Ovary (tissue), 10 donors: ENCODE measurements at regions of chr1 and their contacts with region 1.

Region 1: GRCh38 chr1:27603681-27604578 is at the start of gene AHDC1:
- DNase-seq: peak; percentile 91 to 94 (median 93)
- H3K4me3 ChIP-seq: peak within 1 kb of the TSS; percentile 75
- H3K27ac ChIP-seq: peak within 1 kb of the TSS; percentile 86 to 92
- H3K4me1 ChIP-seq: peaks cover 12% of the 10 kb centered on the region
- H3K27me3 ChIP-seq: no peaks in the 10 kb centered on the region
- CTCF ChIP-seq: peak in 2 of 3 donors; percentile 46 to 60
- EP300 ChIP-seq: no peak
- POLR2A ChIP-seq: peak; percentile 94
- total RNA-seq, gene AHDC1: 11.3 to 159 (median 91.2) TPM

Region 2: DNA sequence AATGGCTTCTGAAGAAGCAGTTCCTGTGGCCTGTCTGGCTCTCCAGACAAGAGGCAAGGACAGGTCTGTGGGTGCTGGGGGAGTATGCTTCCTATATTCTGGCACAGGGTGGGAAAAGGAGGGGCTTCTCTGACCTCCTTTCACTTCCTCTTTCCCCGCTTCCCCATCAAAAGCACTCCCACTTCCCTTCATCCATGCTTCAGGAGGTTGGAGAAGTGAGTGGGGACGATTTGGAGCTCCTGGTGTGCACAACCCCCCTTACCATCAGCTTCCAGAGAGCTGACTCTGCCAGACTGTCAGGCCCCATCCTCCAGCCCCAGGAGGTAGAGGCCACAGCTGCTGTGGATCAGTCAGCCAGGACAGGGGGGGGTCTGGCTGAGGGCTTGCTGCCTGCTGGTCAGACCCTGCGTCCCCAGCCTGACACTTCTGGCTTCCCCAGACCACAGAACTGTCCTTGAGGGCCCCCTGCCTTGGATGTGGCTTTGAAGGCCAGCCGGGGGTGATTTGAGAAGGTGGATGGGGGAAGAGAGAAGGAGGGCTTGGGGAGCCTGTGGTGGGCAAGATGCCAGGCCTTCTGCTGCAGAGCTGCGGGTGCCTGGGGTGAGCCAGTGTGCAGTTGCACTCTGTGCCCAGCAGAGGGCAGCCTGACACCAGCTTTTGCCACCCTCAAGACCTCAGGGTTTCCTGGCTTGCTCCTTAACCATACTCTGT is 303.4 kb before region 1 on chr1:
- intact Hi-C with region 1: loop called in 3 of 4 experiments (anchors 2 to 5 kb)
- DNase-seq: peak; percentile 88 to 93 (median 89)
- H3K4me3 ChIP-seq: no peak overlapping the region
- H3K27ac ChIP-seq: peak overlapping the region; percentile 13 to 41
- H3K4me1 ChIP-seq: no peaks in the 10 kb centered on the region
- H3K27me3 ChIP-seq: no peaks in the 10 kb centered on the region
- CTCF ChIP-seq: peak; percentile 97 to 99 (median 98)
- EP300 ChIP-seq: no peak
- POLR2A ChIP-seq: peak; percentile 23

Region 3: DNA sequence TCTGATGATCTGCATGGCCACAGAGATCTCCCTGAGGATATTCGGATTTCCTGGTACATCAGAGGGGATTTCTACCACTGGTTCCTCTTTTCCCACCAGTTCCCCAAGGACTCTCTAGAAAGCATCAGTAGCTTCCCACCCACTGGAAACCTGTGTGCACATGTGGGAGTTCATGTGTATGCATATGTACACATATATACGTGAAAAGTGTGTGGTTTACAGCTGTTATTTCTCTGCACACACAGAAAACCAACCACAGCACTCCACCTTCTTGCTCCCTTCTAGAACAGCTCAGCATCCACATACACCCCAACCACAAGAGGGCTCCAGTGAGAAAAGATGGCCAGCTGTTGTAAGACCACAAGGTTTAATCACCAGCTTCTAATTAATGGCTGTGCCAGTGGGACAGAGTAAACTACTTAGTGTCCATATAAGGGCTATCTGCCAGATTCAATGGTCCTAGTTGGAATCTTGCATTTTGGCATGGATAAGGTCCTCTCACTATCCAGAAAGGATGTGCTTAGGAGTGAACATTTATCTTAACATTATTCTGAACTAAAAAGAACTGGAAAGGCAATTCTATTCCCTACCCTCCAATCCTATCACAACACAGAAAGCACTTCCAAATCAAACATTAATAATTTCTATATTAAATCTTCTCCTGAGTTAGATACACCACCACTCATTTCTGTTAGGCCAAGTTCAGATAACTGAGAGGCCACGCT is 187.4 kb before region 1 on chr1:
- intact Hi-C with region 1: loop called in 1 of 4 experiments (anchors 5 kb)
- DNase-seq: no peak
- H3K4me3 ChIP-seq: no peak overlapping the region
- H3K27ac ChIP-seq: no peak overlapping the region
- H3K4me1 ChIP-seq: peaks cover 1% of the 10 kb centered on the region
- H3K27me3 ChIP-seq: no peaks in the 10 kb centered on the region
- CTCF ChIP-seq: no peak
- EP300 ChIP-seq: no peak
- POLR2A ChIP-seq: no peak

Region 4: DNA sequence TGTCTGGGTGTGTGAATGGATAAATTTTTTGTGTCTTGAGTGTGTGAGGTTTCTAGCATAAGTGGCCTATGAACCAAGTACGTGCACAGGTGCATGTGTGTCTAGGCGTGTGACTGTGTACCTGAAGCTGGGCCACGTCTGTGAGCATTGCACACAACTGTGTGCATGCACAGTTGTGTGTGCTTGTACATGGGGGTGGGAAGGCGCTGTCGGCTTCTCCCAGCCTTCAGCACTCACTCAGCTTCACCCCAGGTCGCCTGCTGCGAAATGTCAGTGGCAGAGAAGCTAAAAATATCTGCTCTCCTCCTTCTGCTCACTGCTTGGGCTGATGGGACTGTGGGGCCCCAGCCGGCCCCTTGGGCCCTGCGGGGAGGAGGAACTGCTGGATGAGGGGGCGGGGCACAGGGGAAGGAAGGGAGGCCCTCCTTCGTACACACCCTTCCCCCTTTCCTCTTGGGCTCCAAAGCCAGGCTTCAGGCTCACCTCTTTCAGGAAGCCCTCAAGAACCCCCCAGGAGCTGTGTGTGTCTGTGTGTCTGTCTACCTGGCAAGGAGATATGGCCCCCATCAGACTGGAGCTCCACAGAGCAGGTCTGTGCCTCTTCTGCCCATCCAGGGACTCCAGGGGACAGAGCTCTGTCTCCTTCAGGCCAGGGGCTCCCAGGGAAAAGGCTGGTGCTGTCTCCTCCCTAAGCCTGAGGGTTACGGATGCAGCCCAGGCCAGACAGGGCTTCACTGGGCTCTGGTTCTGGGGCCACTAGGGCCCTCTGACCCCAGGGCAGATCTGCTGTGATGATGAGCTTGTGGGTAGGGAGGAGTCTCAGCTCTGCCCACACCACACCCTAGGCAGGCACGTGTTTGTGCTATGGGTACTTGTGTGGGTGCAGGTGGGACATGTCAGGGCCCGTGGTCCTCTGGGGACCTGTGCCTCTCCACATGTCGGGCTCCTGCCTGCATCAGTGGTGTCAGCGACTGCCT is 78.3 kb before region 1 on chr1:
- intact Hi-C with region 1: loop called in 2 of 4 experiments (anchors 10 kb)
- DNase-seq: peak; percentile 75 to 83 (median 82)
- H3K4me3 ChIP-seq: peak overlapping the region; percentile 16
- H3K27ac ChIP-seq: peak overlapping the region; percentile 46 to 98
- H3K4me1 ChIP-seq: peaks cover 53% of the 10 kb centered on the region
- H3K27me3 ChIP-seq: no peaks in the 10 kb centered on the region
- CTCF ChIP-seq: no peak
- EP300 ChIP-seq: no peak
- POLR2A ChIP-seq: no peak

Region 5: DNA sequence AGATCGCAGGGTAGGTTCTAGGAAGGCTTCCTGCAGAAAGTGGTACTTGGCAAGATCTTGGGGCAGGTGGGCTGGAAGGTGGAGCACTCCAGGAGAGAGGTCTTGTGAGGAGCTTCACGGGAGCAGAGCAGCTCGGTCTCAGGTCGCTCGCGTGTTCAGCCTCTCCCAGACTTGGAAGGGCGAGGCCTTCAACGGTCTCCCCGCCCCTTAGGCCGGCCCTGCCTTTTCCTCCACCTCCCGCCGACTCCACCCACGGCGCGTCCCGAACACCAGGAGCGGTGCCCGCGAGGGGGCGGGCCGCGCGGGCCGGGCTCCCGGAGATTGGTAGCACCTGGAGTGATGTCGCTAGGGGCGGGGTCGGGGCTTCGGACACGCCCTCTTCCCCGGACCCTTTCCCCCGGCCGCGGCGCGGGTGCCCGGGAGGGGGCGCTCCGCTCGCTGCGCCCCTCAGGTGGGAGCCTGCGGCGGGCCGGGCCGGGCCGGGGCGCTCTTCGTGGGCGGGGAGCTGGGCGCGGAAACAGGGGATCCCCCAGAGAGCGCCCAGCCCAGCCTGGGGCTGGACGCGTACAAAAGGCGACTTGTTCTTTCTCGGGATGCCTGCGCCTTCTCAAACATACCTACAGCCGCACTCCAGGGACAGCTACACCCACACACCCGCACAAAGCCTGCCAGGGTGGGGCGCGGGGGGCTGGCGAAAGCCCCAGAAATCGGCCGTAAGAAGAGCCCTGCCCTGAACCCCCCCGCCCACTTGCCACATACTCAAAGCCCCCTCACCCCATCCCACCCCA is 35.4 kb before region 1 on chr1:
- intact Hi-C with region 1: loop called in 2 of 4 experiments (anchors 5 kb)
- DNase-seq: peak; percentile 96 to 98 (median 96)
- H3K4me3 ChIP-seq: peak overlapping the region; percentile 34
- H3K27ac ChIP-seq: peak overlapping the region; percentile 88 to 89
- H3K4me1 ChIP-seq: peaks cover 70% of the 10 kb centered on the region
- H3K27me3 ChIP-seq: no peaks in the 10 kb centered on the region
- CTCF ChIP-seq: peak; percentile 72 to 94 (median 83)
- EP300 ChIP-seq: peak; percentile 54
- POLR2A ChIP-seq: no peak